HEK293T (cell line): ENCODE measurements at regions of chr1 and their contacts with region 1.

Region 1: GRCh38 chr1:156591432-156592157 is at the start of gene NAXE:
- DNase-seq: peak; percentile 87

Region 2: GRCh38 chr1:156500797-156501499 is 90.6 kb before region 1 on chr1:
- CTCF ChIA-PET with region 1: interaction called, 3 read pairs
- POLR2A ChIA-PET with region 1: interaction called, 14 read pairs
- DNase-seq: peak; percentile 99

Region 3: GRCh38 chr1:156608036-156608674 is 16.6 kb after region 1 on chr1:
- CTCF ChIA-PET with region 1: interaction called, 8 read pairs
- POLR2A ChIA-PET with region 1: interaction called, 57 read pairs
- DNase-seq: peak; percentile 78

Region 4: GRCh38 chr1:156618853-156619581 is 27.4 kb after region 1 on chr1 and contains the start of gene HAPLN2:
- CTCF ChIA-PET with region 1: interaction called, 11 read pairs
- POLR2A ChIA-PET with region 1: interaction called, 33 read pairs
- DNase-seq: peak; percentile 66